ENCODE measurements at regions of chr13 and their contacts with region 1.

Region 1: GRCh38 chr13:23888658-23889614 is at the start of gene MIPEP:
- DNase-seq: peak; percentile 68 to 94 (median 83)
- ATAC-seq: peak; percentile 98
- H3K4me3 ChIP-seq: peak within 1 kb of the TSS; percentile 88
- H3K4me3 Mint-ChIP-seq: peak within 1 kb of the TSS; percentile 85 to 96 (median 92)
- H3K27ac ChIP-seq: peak within 1 kb of the TSS; percentile 70
- H3K27ac Mint-ChIP-seq: peak within 1 kb of the TSS; percentile 72 to 92 (median 84)
- H3K4me1 ChIP-seq: peaks cover 0 to 5% of the 10 kb centered on the region in 2 donors
- H3K4me1 Mint-ChIP-seq: peaks cover 12 to 31% (median 25%) of the 10 kb centered on the region in 7 donors
- H3K27me3 ChIP-seq: no peaks in the 10 kb centered on the region
- H3K27me3 Mint-ChIP-seq: no peaks in the 10 kb centered on the region
- total RNA-seq, gene MIPEP: 8.0 to 10.5 (median 9.2) TPM

Region 2: DNA sequence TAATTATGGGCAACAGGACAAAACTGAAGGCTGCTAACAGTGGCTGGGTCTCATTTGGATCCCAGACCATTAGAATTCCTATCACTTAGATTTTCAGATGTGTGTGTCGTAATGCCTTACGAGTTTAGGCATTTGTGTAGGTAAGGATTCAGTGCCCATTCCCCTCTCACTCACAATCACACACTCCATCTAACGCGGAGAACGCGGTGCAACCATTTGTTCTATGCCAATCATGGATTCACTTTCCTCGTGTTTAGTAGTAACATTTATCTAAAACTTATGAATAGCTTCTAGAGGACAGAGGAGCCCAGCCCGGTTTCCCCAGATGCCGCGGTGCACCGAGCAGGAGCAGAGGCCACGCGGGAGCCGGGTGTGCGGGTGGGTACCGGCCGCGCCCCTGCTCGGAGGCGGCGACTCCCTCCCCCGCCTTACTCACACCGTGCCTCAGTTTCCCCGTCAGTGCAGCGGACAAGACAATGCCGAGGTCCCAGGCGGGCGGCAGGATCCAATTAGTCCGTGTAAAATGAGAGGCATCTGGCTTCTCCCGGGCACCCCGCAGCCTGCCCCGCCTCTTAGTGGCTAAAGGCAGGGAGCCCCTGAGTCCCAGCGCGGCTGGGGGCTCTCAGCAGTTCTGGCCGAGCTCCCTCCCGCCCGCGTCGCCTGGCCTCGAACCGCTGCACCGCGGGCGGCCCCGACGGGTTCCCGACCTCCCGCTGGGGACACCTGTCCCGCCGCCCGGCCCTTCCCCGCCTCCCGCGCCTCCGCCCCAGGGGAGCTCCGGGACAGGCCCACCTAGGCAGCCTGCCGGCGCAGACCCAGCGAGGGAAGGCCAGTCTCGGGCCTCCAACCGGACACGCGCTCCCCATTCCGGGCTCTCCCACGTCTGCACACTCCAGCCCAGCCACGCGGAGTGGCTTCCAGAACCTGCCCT is 14.3 kb after region 1 on chr13:
- CTCF ChIA-PET with region 1: no interaction called
- POLR2A ChIA-PET with region 1: no interaction called
- intact Hi-C with region 1: no loop called
- DNase-seq: no peak
- ATAC-seq: peak; percentile 18
- H3K4me3 ChIP-seq: no peak overlapping the region
- H3K4me3 Mint-ChIP-seq: peak overlapping the region in 7 of 10 donors; percentile 8 to 56 (median 36)
- H3K27ac ChIP-seq: no peak overlapping the region
- H3K27ac Mint-ChIP-seq: no peak overlapping the region
- H3K4me1 ChIP-seq: no peaks in the 10 kb centered on the region
- H3K4me1 Mint-ChIP-seq: peaks cover 0 to 10% (median 3%) of the 10 kb centered on the region in 7 donors
- H3K27me3 ChIP-seq: peaks cover 0 to 10% of the 10 kb centered on the region in 2 donors
- H3K27me3 Mint-ChIP-seq: peaks cover 41 to 59% (median 42%) of the 10 kb centered on the region in 5 donors

Region 3: DNA sequence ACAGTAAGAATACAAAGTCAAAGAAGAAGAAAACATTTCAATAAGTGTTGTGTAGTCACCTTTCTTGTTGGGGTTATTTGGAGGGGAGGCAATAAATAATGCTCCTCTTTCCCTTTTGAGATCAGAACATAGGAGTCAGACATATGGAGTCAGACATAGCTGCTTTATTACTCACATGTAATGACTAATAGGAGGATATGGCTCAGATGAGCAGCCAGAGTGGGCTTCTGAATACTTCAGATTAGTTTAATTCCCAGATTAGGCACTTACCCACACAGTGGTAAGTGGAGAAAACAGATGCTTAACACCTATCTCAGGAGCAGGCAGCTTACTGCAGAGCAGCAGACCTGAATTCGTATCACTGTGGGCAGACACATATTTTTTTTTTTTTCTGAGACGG is 40.0 kb after region 1 on chr13:
- CTCF ChIA-PET with region 1: no interaction called
- POLR2A ChIA-PET with region 1: no interaction called
- intact Hi-C with region 1: no loop called
- DNase-seq: no peak
- ATAC-seq: no peak
- H3K4me3 ChIP-seq: no peak overlapping the region
- H3K4me3 Mint-ChIP-seq: no peak overlapping the region
- H3K27ac ChIP-seq: no peak overlapping the region
- H3K27ac Mint-ChIP-seq: no peak overlapping the region
- H3K4me1 ChIP-seq: no peaks in the 10 kb centered on the region
- H3K4me1 Mint-ChIP-seq: no peaks in the 10 kb centered on the region
- H3K27me3 ChIP-seq: no peaks in the 10 kb centered on the region
- H3K27me3 Mint-ChIP-seq: peaks cover 22 to 55% (median 32%) of the 10 kb centered on the region in 5 donors

Region 4: DNA sequence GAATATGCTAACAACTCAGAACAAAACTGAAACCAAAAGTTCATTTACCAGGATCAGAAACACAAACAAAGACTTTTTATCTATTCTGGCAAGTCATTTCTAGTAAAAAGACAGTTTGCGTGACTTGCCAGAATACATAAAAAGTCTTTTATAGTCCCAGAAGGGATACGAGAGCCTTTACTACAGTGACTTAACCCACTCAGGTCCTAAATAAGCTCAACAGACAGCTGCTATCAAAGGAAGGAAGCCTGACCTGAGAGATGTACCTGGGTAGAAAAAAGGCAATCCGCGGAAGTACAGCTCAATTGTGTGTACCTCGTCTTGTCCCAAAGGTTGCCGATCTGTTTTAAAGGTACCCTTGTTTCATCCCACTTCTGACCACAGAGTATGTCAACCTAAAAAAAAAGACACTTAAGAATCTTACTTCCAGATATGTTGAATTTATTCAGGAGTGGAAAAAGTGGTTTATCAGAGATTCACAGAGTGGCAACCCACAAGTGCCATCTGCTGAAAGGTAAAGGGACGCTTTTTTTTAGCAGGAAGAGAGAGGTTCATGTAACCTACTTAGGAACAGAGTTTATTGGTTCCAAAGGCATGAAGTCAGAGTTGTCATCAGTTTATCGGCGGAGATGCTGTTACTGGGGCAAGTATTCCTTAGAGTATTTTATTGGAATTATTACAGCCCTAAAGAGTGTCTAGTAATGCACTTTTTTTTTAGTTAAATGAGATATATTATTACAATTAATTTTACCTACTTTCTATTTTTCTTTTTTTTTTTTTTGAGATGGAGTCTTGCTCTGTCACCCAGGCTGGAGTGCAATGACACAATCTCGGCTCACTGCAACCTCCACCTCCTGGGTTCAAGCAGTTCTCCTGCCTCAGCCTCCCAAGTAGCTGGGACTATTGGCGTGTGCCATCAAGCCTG is 78.0 kb after region 1 on chr13:
- CTCF ChIA-PET with region 1: no interaction called
- POLR2A ChIA-PET with region 1: no interaction called
- intact Hi-C with region 1: loop called (anchors 1 kb)
- DNase-seq: peak in 6 of 9 donors; percentile 19 to 58 (median 48)
- ATAC-seq: peak; percentile 79
- H3K4me3 ChIP-seq: peak overlapping the region; percentile 57
- H3K4me3 Mint-ChIP-seq: peak overlapping the region; percentile 65 to 88 (median 84)
- H3K27ac ChIP-seq: peak overlapping the region; percentile 52
- H3K27ac Mint-ChIP-seq: peak overlapping the region; percentile 18 to 93 (median 88)
- H3K4me1 ChIP-seq: peaks cover 6% of the 10 kb centered on the region in 2 donors
- H3K4me1 Mint-ChIP-seq: peaks cover 6 to 39% (median 18%) of the 10 kb centered on the region in 7 donors
- H3K27me3 ChIP-seq: no peaks in the 10 kb centered on the region
- H3K27me3 Mint-ChIP-seq: no peaks in the 10 kb centered on the region

Region 5: DNA sequence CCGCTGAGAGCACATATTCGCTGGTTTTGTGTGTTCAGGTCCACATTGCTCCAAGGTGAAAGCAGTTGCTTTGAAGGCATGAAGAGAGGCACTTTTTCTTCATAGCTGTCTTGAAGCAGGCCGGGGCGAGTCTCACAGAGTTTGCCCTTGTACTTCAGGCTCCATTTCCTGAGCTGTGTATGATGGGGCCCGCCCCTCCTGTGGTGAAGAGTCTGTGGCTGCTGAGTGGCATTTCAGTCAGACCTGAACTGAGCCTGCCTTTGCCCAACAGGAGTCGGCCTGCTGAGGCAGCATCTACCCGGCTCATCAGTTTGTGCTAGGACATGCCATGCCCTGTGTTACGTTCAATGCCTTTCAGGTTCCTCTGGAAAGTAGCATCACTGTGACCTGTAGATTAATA is 376.0 kb after region 1 on chr13:
- CTCF ChIA-PET with region 1: no interaction called
- POLR2A ChIA-PET with region 1: no interaction called
- intact Hi-C with region 1: loop called in 1 of 2 experiments (anchors 2 kb)
- DNase-seq: peak; percentile 48 to 85 (median 83)
- ATAC-seq: peak; percentile 97
- H3K4me3 ChIP-seq: peak overlapping the region; percentile 28
- H3K4me3 Mint-ChIP-seq: peak overlapping the region; percentile 79 to 85 (median 82)
- H3K27ac ChIP-seq: peak overlapping the region; percentile 89
- H3K27ac Mint-ChIP-seq: peak overlapping the region; percentile 91 to 100 (median 98)
- H3K4me1 ChIP-seq: peaks cover 88 to 94% of the 10 kb centered on the region in 2 donors
- H3K4me1 Mint-ChIP-seq: peaks cover 64 to 98% (median 94%) of the 10 kb centered on the region in 7 donors
- H3K27me3 ChIP-seq: no peaks in the 10 kb centered on the region
- H3K27me3 Mint-ChIP-seq: no peaks in the 10 kb centered on the region

Region 6: GRCh38 chr13:24512197-24512907 is 623.4 kb after region 1 on chr13 and contains the start of gene PARP4:
- CTCF ChIA-PET with region 1: no interaction called
- POLR2A ChIA-PET with region 1: no interaction called
- intact Hi-C with region 1: loop called in 1 of 2 experiments (anchors 5 kb)
- DNase-seq: peak; percentile 49 to 74 (median 68)
- ATAC-seq: peak; percentile 85
- H3K4me3 ChIP-seq: peak within 1 kb of the TSS; percentile 95
- H3K4me3 Mint-ChIP-seq: peak within 1 kb of the TSS; percentile 88 to 96 (median 92)
- H3K27ac ChIP-seq: peak within 1 kb of the TSS; percentile 67
- H3K27ac Mint-ChIP-seq: peak within 1 kb of the TSS; percentile 68 to 93 (median 88)
- H3K4me1 ChIP-seq: peaks cover 3 to 7% of the 10 kb centered on the region in 2 donors
- H3K4me1 Mint-ChIP-seq: peaks cover 22 to 51% (median 41%) of the 10 kb centered on the region in 7 donors
- H3K27me3 ChIP-seq: no peaks in the 10 kb centered on the region
- H3K27me3 Mint-ChIP-seq: peaks cover 0 to 4% (median 0%) of the 10 kb centered on the region in 5 donors
- total RNA-seq, gene PARP4: 33.4 to 71.1 (median 65.4) TPM

Measured in naive thymus-derived CD4-positive, alpha-beta T cell (primary cell).